ENCODE measurements at regions of chr1 and their contacts with region 1.

Region 1: GRCh38 chr1:19698181-19698580 is 33.5 kb downstream of the HTR6 start:
- DNase-seq: no peak
- H3K4me3 ChIP-seq: no peak overlapping the region
- H3K27ac ChIP-seq: no peak overlapping the region
- H3K4me1 ChIP-seq: no peaks in the 10 kb centered on the region
- H3K27me3 ChIP-seq: no peaks in the 10 kb centered on the region
- CTCF ChIP-seq: no peak

Region 2: DNA sequence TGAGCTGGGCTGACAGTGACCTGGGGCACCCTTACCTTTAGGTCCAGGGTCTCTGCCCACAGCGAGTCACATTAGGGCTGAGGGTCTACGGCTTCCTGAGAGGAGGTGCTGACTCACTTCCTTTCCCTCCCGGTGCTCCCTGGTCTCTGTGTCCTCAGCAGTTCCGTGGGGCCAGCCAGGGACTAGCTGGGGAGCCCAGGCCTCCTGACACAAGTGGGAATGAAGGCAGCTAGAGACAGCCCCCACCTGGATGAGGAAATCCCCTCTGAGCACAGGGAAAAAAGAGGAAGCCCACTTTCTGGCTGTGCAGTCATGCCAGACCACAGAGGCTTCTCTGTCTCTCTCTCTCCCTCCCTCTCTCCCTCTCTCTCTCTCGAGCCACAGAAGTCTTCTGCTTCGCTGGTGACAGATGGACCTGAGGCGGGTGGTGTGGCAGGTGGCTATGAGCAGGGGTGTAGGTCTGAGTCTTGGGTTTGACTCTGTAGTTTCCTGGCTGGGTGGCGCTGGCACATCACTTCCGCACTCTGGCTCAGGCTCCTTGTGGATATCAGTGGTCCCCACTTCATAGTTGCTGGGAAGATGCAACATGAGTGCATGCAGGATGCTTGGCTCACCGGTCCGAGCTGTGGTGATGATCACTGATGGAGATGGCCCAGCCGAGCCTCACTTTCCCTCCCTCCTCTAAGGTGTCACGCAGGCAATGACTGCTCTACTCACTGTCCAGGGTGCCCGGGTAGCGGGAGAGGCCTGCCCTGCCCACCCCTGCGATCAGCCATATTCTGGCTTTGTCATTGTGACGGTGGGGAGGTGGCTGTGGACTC is 382.6 kb before region 1 on chr1:
- CTCF ChIA-PET with region 1: no interaction called
- dilution Hi-C with region 1: no loop called
- in situ Hi-C with region 1: no loop called
- intact Hi-C with region 1: no loop called
- DNase-seq: peak; percentile 23
- H3K4me3 ChIP-seq: no peak overlapping the region
- H3K27ac ChIP-seq: no peak overlapping the region
- H3K4me1 ChIP-seq: peaks cover 42% of the 10 kb centered on the region
- H3K27me3 ChIP-seq: no peaks in the 10 kb centered on the region
- CTCF ChIP-seq: no peak

Region 3: GRCh38 chr1:19628879-19629278 is 69.3 kb before region 1 on chr1:
- CTCF ChIA-PET with region 1: no interaction called
- dilution Hi-C with region 1: loop called (anchors 5 kb)
- in situ Hi-C with region 1: no loop called
- intact Hi-C with region 1: no loop called
- DNase-seq: no peak
- H3K4me3 ChIP-seq: no peak overlapping the region
- H3K27ac ChIP-seq: no peak overlapping the region
- H3K4me1 ChIP-seq: no peaks in the 10 kb centered on the region
- H3K27me3 ChIP-seq: no peaks in the 10 kb centered on the region
- CTCF ChIP-seq: no peak

Region 4: DNA sequence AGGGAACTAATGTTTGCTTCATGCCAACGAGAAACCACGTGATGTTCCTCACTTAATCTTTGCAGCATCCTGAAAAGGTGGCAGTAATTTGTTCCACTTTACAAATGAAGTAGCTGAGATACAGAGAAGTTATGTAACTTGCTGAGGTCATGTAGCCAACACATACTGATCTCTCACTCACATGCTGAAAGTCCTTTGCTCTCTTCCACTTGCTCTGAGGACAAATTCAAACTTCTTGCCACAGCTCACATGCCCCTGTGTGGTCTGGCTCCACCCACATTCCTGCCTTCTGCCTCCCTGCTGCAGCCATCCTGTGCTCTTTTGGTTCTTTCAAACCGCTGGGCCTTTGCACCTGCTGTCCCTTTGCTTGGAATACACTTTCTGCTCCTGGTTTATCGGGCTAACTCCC is 46.2 kb after region 1 on chr1:
- CTCF ChIA-PET with region 1: no interaction called
- dilution Hi-C with region 1: no loop called
- in situ Hi-C with region 1: no loop called
- intact Hi-C with region 1: no loop called
- DNase-seq: no peak
- H3K4me3 ChIP-seq: no peak overlapping the region
- H3K27ac ChIP-seq: no peak overlapping the region
- H3K4me1 ChIP-seq: peaks cover 5% of the 10 kb centered on the region
- H3K27me3 ChIP-seq: no peaks in the 10 kb centered on the region
- CTCF ChIP-seq: no peak

Region 5: DNA sequence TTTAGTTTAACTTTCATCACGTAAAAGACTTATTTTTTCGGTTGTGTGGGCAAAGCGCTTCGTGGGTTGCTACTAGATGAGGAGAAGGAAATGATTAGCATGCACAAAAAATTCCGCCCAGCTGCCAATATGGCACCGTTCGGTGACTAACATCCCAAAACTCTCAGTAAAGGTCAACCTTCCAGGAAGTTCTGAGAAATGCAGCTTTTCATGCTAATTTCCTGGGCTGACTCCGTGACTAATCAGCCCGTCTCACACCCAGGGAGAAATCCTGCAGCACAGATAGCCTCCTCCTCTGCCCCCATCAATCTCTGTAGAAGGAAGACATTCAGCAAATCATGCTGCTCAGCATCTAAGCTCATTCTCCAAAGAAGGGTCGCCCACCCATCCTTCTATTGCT is 67.4 kb after region 1 on chr1:
- CTCF ChIA-PET with region 1: no interaction called
- dilution Hi-C with region 1: no loop called
- in situ Hi-C with region 1: no loop called
- intact Hi-C with region 1: no loop called
- DNase-seq: peak; percentile 74
- H3K4me3 ChIP-seq: no peak overlapping the region
- H3K27ac ChIP-seq: no peak overlapping the region
- H3K4me1 ChIP-seq: peaks cover 6% of the 10 kb centered on the region
- H3K27me3 ChIP-seq: no peaks in the 10 kb centered on the region
- CTCF ChIP-seq: no peak

Region 6: GRCh38 chr1:19811206-19811851 is 113.1 kb after region 1 on chr1:
- CTCF ChIA-PET with region 1: no interaction called
- dilution Hi-C with region 1: no loop called
- in situ Hi-C with region 1: no loop called
- intact Hi-C with region 1: no loop called
- DNase-seq: no peak
- H3K4me3 ChIP-seq: no peak overlapping the region
- H3K27ac ChIP-seq: no peak overlapping the region
- H3K4me1 ChIP-seq: no peaks in the 10 kb centered on the region
- H3K27me3 ChIP-seq: no peaks in the 10 kb centered on the region
- CTCF ChIP-seq: peak; percentile 63 to 68

Measured in mammary epithelial cell (primary cell).